Activated T-helper 1 cell treated with anti-CD3 and anti-CD28 coated beads, Interleukin-12 subunit alpha, Interleukin-12 subunit beta, Interleukin-2, Interleukin-4 antibody, amounts not matched to agents 30 ng/mL and 10 ng/mL and 1 ng/mL, durations not matched to agents 14 hours and 24 hours and 36 hours (primary cell): ENCODE measurements at regions of chr7 and their contacts with region 1.

Region 1: DNA sequence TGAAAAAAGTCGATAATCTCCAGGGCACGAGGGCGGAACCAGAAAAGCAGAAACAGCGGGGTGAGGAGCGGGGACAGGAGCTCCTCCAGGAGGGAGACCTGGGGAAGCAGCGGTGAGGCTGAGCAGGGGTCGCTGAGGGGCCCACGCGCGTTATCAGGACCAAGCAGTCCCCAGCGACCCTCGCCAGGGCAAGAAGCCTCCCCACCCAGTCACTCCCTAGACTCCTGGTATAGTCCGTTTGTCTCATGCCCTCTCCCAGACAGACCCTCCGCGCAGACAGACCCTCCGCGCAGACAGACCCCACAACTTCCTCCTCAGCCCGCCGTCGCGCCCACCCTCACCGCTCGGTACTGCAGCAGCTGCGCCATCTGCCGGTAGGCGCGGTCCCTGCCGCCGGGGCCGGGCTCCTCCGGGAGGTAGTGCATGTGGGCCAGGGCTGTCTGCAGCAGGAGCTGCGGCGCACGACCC is 6.3 kb downstream of the ATG9B start:
- DNase-seq: peak; percentile 73
- H3K4me3 Mint-ChIP-seq: peak overlapping the region; percentile 82
- H3K27ac Mint-ChIP-seq: peak overlapping the region; percentile 81
- H3K4me1 Mint-ChIP-seq: peaks cover 39% of the 10 kb centered on the region
- H3K27me3 Mint-ChIP-seq: peaks cover 19% of the 10 kb centered on the region

Region 2: DNA sequence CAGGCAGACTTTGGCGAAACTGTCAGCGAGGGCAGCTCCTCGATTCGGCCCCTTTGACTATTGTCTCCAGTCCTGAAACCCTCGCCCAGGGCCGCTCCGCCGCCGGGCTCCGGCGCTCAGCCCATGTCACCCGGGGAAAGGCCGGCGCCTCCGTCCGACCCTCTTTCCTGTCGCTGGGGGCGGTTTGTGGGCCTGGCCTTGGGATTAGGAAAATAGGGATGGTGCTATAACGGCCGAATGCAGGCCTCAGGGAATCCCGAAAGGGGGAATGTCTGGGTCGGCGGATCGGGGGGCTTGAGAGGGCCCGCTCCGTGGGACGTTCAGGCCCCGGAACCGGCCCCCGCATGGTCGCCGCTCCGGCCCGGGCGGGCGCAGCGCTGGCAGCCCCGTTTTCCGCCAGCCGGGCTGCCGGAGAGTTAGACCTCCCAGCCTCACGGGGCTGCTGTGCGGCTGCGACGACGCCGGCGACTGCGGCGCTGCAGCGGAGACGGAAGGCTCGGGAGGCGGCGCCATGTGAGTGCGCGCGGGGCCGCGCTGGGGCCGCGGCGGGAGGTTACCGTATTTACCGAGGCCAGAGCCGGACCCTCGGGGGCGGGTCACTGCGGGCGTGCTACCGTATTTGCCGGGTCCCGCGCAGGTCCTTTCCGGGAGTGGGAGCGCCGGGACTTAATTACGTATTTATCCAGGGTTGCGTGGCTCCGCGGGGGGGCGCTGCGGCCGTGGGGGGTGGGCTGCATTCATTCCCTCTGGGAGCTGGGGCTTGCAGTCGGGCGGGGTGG is 613.0 kb before region 1 on chr7:
- intact Hi-C with region 1: loop called (anchors 5 kb)
- DNase-seq: peak; percentile 79
- H3K4me3 Mint-ChIP-seq: peak overlapping the region; percentile 95
- H3K27ac Mint-ChIP-seq: peak overlapping the region; percentile 95
- H3K4me1 Mint-ChIP-seq: peaks cover 57% of the 10 kb centered on the region
- H3K27me3 Mint-ChIP-seq: no peaks in the 10 kb centered on the region

Region 3: DNA sequence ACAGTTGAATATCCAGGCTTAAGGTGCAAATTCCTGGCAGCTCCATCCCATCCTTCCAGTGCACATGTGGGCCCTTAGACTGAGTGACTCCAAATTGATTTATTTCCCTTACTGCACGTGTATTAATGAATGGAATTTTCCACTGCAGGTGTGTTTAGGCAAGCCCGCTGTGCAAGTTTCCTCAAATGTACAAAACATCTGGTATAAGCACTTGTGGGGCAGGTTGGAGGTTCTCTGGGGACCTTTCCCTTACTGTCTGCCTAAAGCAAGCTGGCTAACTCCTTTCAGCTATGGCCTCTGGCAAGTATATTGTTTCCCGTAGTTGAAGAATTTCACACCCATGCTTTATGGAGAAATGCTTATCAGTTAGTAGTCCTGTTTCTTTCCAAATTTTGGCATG is 360.5 kb before region 1 on chr7:
- intact Hi-C with region 1: no loop called
- DNase-seq: no peak
- H3K4me3 Mint-ChIP-seq: no peak overlapping the region
- H3K27ac Mint-ChIP-seq: no peak overlapping the region
- H3K4me1 Mint-ChIP-seq: peaks cover 34% of the 10 kb centered on the region
- H3K27me3 Mint-ChIP-seq: no peaks in the 10 kb centered on the region

Region 4: DNA sequence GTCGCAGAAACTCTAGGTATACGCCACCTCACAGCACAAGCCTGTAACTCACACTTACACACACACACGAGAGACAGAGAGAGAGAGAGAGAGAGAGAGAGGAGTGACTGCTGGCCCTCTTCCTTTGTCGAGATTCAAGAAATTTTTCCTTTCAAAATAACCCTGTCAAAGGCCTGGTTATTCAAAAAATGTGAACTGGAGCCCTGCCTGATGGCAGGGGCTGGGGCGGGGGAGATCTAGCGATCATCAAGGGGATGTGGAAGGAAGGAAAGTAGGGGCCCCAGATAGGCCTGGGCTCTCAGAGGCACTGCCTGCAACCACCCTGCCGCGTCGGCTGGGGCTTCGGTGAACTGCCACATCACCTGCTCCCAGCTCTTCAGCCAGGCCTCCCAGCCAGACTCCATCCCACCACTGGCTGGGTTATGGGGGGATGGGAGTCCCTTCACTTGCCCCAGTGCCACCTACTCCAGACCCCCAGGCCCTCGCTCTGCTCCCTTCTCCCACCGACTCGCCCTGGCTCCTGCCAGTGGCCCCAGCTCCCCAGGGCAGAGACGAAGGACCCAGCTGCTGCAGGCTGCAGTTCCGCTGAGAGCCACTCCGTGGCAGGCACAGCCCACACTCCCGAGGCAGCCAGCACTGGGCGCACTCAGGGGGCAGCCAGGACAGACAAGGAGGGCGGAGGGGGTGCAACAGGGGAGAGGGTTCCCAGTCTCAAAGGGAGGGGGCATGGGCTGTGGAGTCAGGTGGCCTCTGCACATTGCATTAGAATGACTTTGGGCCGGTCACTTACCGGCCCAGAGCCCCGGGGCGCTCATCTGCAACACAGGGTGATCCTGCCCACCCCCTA is 55.2 kb before region 1 on chr7:
- intact Hi-C with region 1: loop called (anchors 1 kb)
- DNase-seq: peak; percentile 39
- H3K4me3 Mint-ChIP-seq: no peak overlapping the region
- H3K27ac Mint-ChIP-seq: no peak overlapping the region
- H3K4me1 Mint-ChIP-seq: no peaks in the 10 kb centered on the region
- H3K27me3 Mint-ChIP-seq: peaks cover 28% of the 10 kb centered on the region

Region 5: GRCh38 chr7:150988230-150989226 is 29.5 kb before region 1 on chr7:
- intact Hi-C with region 1: loop called (anchors 2 kb)
- DNase-seq: peak; percentile 57
- H3K4me3 Mint-ChIP-seq: peak overlapping the region; percentile 58
- H3K27ac Mint-ChIP-seq: no peak overlapping the region
- H3K4me1 Mint-ChIP-seq: peaks cover 25% of the 10 kb centered on the region
- H3K27me3 Mint-ChIP-seq: peaks cover 30% of the 10 kb centered on the region

Region 6: GRCh38 chr7:151057989-151058780 is 40.2 kb after region 1 on chr7:
- intact Hi-C with region 1: loop called (anchors 2 kb)
- DNase-seq: peak; percentile 95
- H3K4me3 Mint-ChIP-seq: peak overlapping the region; percentile 93
- H3K27ac Mint-ChIP-seq: peak overlapping the region; percentile 92
- H3K4me1 Mint-ChIP-seq: peaks cover 46% of the 10 kb centered on the region
- H3K27me3 Mint-ChIP-seq: no peaks in the 10 kb centered on the region